ENCODE measurements at regions of chr17 and their contacts with region 1.

Region 1: GRCh38 chr17:20992987-20993862 is 49.6 kb downstream of the USP22 start:
- DNase-seq: peak; percentile 62 to 83
- H3K4me3 ChIP-seq: no peak overlapping the region
- H3K27ac ChIP-seq: no peak overlapping the region
- H3K4me1 ChIP-seq: no peaks in the 10 kb centered on the region
- H3K27me3 ChIP-seq: no peaks in the 10 kb centered on the region
- CTCF ChIP-seq: peak; percentile 95

Region 2: DNA sequence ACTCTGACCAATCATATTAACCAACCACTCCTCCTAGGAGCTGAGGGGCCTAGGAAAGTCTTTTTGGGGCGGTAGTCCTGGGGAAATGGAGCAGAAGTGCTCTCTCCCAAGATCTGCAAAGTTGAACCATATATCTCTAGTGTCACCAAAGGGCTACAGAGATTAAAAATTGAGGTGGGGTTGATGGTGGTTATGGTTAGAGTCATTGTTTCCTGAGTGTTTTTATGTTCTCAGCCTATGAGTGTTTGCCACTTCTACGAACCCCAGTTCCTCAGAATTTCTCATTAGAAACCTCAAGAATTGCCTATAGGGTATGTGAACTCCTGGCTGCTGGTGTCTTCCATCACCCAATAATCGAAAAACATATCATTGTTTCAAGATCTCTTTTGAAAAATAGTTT is 195.9 kb before region 1 on chr17:
- CTCF ChIA-PET with region 1: no interaction called
- POLR2A ChIA-PET with region 1: no interaction called
- intact Hi-C with region 1: loop called (anchors 2 kb)
- DNase-seq: no peak
- H3K4me3 ChIP-seq: no peak overlapping the region
- H3K27ac ChIP-seq: no peak overlapping the region
- H3K4me1 ChIP-seq: peaks cover 5% of the 10 kb centered on the region; the same call in 1 of the 2 replicates
- H3K27me3 ChIP-seq: no peaks in the 10 kb centered on the region
- CTCF ChIP-seq: no peak

Region 3: GRCh38 chr17:20852239-20852989 is 140.8 kb before region 1 on chr17:
- CTCF ChIA-PET with region 1: interaction called, 3 read pairs
- POLR2A ChIA-PET with region 1: no interaction called
- intact Hi-C with region 1: loop called (anchors 1 kb)
- DNase-seq: peak; percentile 42 to 61
- H3K4me3 ChIP-seq: peak overlapping the region; percentile 63
- H3K27ac ChIP-seq: no peak overlapping the region
- H3K4me1 ChIP-seq: peaks cover 8% of the 10 kb centered on the region; the same call in 1 of the 2 replicates
- H3K27me3 ChIP-seq: no peaks in the 10 kb centered on the region
- CTCF ChIP-seq: no peak

Region 4: DNA sequence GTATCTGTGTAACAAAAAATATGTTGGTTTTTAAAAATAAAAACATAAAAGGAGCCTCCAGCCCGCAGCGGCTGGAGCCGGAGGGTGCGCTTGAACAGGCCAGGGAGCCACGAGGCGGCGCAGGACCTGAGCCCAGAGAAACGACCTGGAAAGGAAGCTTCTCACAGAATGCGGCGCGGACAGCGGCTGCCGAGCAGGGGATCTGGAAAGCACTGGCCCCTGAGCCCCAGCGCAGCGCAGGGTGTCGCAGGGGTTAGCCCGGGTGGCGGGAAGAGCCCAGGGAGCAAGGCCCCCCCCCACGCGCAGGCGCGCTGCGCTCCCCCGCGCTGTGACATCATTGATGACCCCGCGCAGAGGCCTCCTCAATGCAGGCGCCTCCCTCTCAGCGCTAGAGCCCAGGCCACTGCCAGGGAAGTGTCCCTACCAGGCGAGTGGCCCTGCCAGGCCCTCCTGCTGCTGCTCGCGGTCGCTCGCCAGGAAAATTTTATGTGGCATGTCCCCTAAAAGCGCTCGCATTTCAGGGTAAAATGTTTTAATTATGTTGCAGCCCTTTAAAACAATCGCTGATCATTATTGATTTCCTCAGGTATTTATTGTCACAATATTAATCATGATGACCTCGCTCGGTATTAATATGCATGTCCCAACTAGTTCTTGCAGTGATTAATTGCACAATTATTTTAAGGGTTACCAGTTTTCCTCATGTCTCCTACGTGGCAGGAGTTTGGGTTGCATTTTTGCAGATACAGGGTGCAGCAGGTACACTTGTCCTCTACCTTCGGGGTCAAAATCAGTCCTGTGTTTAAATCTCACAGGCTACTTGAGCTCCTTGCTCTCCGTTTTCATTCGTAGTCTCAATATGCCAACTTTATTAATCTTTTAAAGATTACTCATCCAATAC is 84.6 kb before region 1 on chr17:
- CTCF ChIA-PET with region 1: interaction called, 5 read pairs
- POLR2A ChIA-PET with region 1: interaction called, 3 read pairs
- intact Hi-C with region 1: loop called (anchors 1 kb)
- DNase-seq: peak; percentile 72 to 92
- H3K4me3 ChIP-seq: peak overlapping the region; percentile 51
- H3K27ac ChIP-seq: peak overlapping the region; percentile 57
- H3K4me1 ChIP-seq: peaks cover 16% of the 10 kb centered on the region
- H3K27me3 ChIP-seq: no peaks in the 10 kb centered on the region
- CTCF ChIP-seq: peak; percentile 58

Region 5: DNA sequence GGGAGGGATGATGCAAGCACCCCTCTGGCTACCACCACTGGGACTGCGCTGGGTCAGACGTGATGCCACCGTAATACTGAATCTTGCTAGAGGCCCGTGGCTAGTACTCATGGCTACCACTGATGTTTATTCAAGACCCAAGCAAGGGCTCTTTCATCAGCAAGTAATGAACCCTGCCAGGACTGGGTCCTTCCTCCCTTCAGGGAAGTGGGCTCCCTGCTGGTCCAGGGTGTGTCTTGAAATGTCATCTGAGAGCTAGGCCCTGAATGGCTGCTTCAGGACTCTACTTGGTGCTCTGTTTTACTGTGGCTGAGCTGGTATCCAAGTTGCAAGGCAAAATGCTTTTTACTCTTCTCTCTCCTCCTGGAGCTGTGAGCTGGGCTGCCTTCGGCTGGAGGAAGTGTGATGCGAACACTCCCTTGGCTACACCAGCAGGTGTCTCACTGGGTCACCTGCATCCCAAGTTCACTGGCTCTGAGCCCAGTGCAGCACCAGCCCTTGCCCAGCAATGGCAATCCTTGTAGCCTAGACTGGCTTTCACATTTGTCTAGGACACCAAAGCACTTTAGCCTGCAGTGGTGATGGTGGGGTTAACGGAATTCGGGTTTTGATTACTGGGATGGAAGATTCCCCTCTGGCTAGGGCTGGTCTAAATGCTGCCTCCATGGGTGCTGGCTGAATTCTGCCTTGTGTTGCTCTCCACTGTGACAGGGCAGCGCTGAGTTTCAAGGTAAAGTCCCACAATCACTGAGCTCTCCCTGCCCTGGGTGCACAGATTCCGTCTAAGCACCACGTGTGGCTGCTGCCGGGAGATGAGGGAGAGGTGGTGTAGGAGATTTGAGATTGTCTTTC is 49.0 kb before region 1 on chr17:
- CTCF ChIA-PET with region 1: interaction called, 3 read pairs
- POLR2A ChIA-PET with region 1: no interaction called
- intact Hi-C with region 1: loop called (anchors 2 kb)
- DNase-seq: peak; percentile 42 to 66
- H3K4me3 ChIP-seq: no peak overlapping the region
- H3K27ac ChIP-seq: no peak overlapping the region
- H3K4me1 ChIP-seq: 0 out of 2 replicates have a peak, but pooled peaks cover 4% of the 10 kb centered on the region
- H3K27me3 ChIP-seq: peaks cover 22% of the 10 kb centered on the region; the same call in 1 of the 2 replicates
- CTCF ChIP-seq: peak; percentile 68